ENCODE measurements at regions of chr7 and their contacts with region 1.

Region 1: DNA sequence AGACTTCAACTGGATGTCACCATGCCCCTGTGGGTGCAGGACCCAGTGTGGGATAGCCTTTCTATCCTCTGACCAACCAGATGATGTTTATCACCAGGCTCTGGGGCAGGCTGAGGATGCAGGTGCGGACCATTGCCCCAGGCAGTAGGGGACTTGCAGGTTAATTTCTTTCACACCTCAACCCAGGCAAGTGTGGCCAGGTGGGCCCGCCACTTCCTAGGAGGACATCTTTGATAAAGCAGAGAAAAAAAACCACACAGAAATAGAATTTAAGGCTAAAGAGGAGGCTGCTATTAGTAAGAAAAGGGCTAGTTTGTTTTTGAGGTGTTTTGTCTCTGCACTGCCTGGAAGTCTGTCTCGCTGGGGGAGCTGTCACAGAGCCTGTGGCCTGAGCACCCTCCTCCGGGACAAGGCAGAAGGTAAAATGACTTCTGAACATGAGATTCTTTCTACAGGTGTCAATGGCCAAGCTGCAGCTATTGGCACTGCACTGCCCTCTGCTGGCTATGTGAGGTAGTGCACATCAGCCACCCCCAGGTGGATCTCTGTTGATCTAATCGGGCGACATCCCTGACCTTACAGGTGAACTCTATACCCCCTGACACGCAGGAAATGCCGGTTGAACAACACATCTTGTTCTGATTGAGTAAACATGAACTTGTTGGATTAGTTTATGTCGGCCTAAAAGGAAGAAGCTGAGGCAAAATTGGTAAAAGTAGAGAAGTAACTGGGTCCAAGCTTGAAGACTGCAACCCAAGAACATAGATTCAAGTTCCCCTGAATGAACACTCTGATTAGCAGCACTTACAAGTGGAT is 21.0 kb downstream of the UPP1 start:
- DNase-seq: peak; percentile 64 to 75
- ATAC-seq: peak; percentile 63 to 82
- H3K4me3 ChIP-seq: no peak overlapping the region
- H3K27ac ChIP-seq: no peak overlapping the region
- H3K4me1 ChIP-seq: no peaks in the 10 kb centered on the region
- CTCF ChIP-seq: peak; percentile 98
- EP300 ChIP-seq: no peak
- POLR2A ChIP-seq: no peak
- RAD21 ChIP-seq: peak; percentile 96 to 97

Region 2: GRCh38 chr7:47266131-47266706 is 843.8 kb before region 1 on chr7:
- CTCF ChIA-PET with region 1: interaction called, 16 read pairs
- POLR2A ChIA-PET with region 1: no interaction called
- DNase-seq: peak; percentile 66 to 70
- ATAC-seq: peak; percentile 60 to 81; a peak in 5 of 6 replicates
- H3K4me3 ChIP-seq: no peak overlapping the region
- H3K27ac ChIP-seq: peak overlapping the region in 1 of 2 experiments; percentile 45; a peak in 3 of 6 replicates
- H3K4me1 ChIP-seq: peaks cover 10% of the 10 kb centered on the region
- CTCF ChIP-seq: peak; percentile 93
- EP300 ChIP-seq: no peak
- POLR2A ChIP-seq: no peak
- RAD21 ChIP-seq: peak; percentile 95 to 96

Region 3: DNA sequence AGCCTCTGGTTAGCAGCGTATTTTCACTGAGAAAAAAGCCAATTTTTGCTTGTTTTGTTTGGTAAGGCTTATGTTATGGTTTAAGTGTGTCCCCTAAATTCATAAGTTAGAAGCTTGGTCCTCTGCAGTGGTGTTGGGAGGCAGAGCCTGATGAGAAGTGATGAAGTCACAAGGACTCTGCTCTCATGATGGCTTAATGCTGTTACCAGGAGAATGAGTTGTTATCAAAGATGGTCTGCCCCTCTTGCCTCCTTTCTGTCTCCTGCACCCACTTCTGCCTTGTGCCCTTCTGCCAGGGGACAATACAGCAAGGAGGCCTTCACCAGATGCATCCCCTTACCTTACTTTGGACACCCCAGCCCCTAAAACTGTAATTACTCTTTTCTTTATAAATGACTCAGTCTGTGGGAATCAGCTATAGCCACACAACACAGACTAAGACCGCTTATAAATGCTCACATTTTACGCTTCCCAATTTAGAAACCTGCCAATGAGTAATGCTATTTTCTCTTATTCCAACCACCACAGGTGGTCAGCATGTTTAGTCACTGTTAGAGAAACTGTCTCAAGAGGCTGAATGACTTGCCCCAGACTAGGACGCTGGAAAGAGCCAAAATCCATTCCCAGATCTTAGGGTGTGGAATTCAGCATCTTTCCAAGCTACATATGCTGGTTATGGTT is 155.7 kb before region 1 on chr7:
- CTCF ChIA-PET with region 1: interaction called, 26 read pairs
- POLR2A ChIA-PET with region 1: no interaction called
- DNase-seq: no peak
- ATAC-seq: peak in 1 of 2 experiments; percentile 16; a peak in 1 of 6 replicates
- H3K4me3 ChIP-seq: no peak overlapping the region
- H3K27ac ChIP-seq: no peak overlapping the region
- H3K4me1 ChIP-seq: 0 out of 3 replicates have a peak, but pooled peaks cover 3% of the 10 kb centered on the region
- CTCF ChIP-seq: no peak
- EP300 ChIP-seq: no peak
- POLR2A ChIP-seq: no peak
- RAD21 ChIP-seq: no peak

Region 4: GRCh38 chr7:47979145-47979831 is 130.8 kb before region 1 on chr7 and contains the start of gene HUS1:
- CTCF ChIA-PET with region 1: interaction called, 13 read pairs
- POLR2A ChIA-PET with region 1: no interaction called
- DNase-seq: peak; percentile 90 to 93
- ATAC-seq: peak; percentile 99
- H3K4me3 ChIP-seq: peak within 1 kb of the TSS; percentile 83
- H3K27ac ChIP-seq: peak within 1 kb of the TSS; percentile 81 to 93
- H3K4me1 ChIP-seq: peaks cover 6% of the 10 kb centered on the region; the same call in 2 of the 3 replicates
- CTCF ChIP-seq: no peak
- EP300 ChIP-seq: no peak
- POLR2A ChIP-seq: peak; percentile 76
- RAD21 ChIP-seq: peak in 1 of 2 experiments; percentile 27; a peak in 1 of 5 replicates
- polyA plus RNA-seq, gene HUS1: 34.7 and 39.8 TPM in 2 replicates

Region 5: GRCh38 chr7:48035301-48035966 is 74.6 kb before region 1 on chr7 and contains the start of gene C7orf57:
- CTCF ChIA-PET with region 1: interaction called, 35 read pairs
- POLR2A ChIA-PET with region 1: no interaction called
- DNase-seq: peak; percentile 85 to 97
- ATAC-seq: peak; percentile 98 to 99
- H3K4me3 ChIP-seq: peak within 1 kb of the TSS; percentile 76
- H3K27ac ChIP-seq: no peak within 1 kb of the TSS
- H3K4me1 ChIP-seq: peaks cover 11% of the 10 kb centered on the region; the same call in 1 of the 3 replicates
- CTCF ChIP-seq: 0 out of 3 replicates have a peak, but pooled peaks have one; percentile 13
- EP300 ChIP-seq: no peak
- POLR2A ChIP-seq: no peak
- RAD21 ChIP-seq: peak in 1 of 2 experiments; percentile 43; a peak in 1 of 5 replicates
- polyA plus RNA-seq, gene C7orf57: 0.05 TPM in 1 of 2 replicates, not detected in the other

Region 6: GRCh38 chr7:48154792-48155413 is 44.8 kb after region 1 on chr7:
- CTCF ChIA-PET with region 1: interaction called, 12 read pairs
- POLR2A ChIA-PET with region 1: no interaction called
- DNase-seq: peak; percentile 48 to 66
- ATAC-seq: peak; percentile 90 to 97
- H3K4me3 ChIP-seq: no peak overlapping the region
- H3K27ac ChIP-seq: no peak overlapping the region
- H3K4me1 ChIP-seq: peaks cover 4% of the 10 kb centered on the region; the same call in 1 of the 3 replicates
- CTCF ChIP-seq: peak; percentile 79
- EP300 ChIP-seq: no peak
- POLR2A ChIP-seq: no peak
- RAD21 ChIP-seq: peak; percentile 87 to 94

Region 7: DNA sequence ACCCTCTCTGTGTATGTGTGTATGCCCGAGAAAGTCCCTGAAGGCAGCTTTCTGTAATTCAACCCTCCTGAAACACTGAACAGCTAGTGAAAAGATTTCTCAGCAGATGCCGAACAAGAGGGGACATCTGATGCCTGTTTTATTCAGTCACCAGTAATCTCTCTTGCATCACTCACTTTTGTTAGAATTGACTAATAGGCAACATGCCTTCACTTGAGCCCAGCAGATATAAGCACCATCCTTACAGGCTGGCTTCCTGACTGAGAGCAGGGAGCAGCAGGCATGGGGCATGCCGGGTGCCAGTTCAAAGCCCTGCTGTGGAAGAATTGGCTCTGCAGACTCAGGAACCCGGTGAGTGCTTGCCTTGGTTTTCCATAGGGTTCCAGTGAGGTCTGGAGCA is 61.1 kb after region 1 on chr7 and contains the start of gene ABCA13:
- CTCF ChIA-PET with region 1: no interaction called
- POLR2A ChIA-PET with region 1: no interaction called
- DNase-seq: no peak
- ATAC-seq: peak in 1 of 2 experiments; percentile 38; a peak in 2 of 6 replicates
- H3K4me3 ChIP-seq: no peak within 1 kb of the TSS
- H3K27ac ChIP-seq: no peak within 1 kb of the TSS
- H3K4me1 ChIP-seq: 0 out of 3 replicates have a peak, but pooled peaks cover 4% of the 10 kb centered on the region
- CTCF ChIP-seq: no peak
- EP300 ChIP-seq: no peak
- POLR2A ChIP-seq: no peak
- RAD21 ChIP-seq: no peak
- polyA plus RNA-seq, gene ABCA13: 0.01 TPM in 2 replicates

Region 8: GRCh38 chr7:48213226-48213625 is 103.2 kb after region 1 on chr7:
- CTCF ChIA-PET with region 1: no interaction called
- POLR2A ChIA-PET with region 1: no interaction called
- DNase-seq: no peak
- ATAC-seq: no peak
- H3K4me3 ChIP-seq: no peak overlapping the region
- H3K27ac ChIP-seq: no peak overlapping the region
- H3K4me1 ChIP-seq: no peaks in the 10 kb centered on the region
- CTCF ChIP-seq: no peak
- EP300 ChIP-seq: no peak
- POLR2A ChIP-seq: no peak
- RAD21 ChIP-seq: no peak